ENCODE measurements at regions of chr20 and their contacts with region 1.

Region 1: GRCh38 chr20:62048821-62049685 is 16.6 kb downstream of the TAF4 start:
- DNase-seq: no peak
- H3K4me3 ChIP-seq: no peak overlapping the region
- H3K4me3 Mint-ChIP-seq: no peak overlapping the region
- H3K27ac Mint-ChIP-seq: no peak overlapping the region
- H3K4me1 ChIP-seq: no peaks in the 10 kb centered on the region
- H3K4me1 Mint-ChIP-seq: peaks cover 6% of the 10 kb centered on the region
- H3K27me3 ChIP-seq: no peaks in the 10 kb centered on the region
- H3K27me3 Mint-ChIP-seq: no peaks in the 10 kb centered on the region
- CTCF ChIP-seq: no peak

Region 2: DNA sequence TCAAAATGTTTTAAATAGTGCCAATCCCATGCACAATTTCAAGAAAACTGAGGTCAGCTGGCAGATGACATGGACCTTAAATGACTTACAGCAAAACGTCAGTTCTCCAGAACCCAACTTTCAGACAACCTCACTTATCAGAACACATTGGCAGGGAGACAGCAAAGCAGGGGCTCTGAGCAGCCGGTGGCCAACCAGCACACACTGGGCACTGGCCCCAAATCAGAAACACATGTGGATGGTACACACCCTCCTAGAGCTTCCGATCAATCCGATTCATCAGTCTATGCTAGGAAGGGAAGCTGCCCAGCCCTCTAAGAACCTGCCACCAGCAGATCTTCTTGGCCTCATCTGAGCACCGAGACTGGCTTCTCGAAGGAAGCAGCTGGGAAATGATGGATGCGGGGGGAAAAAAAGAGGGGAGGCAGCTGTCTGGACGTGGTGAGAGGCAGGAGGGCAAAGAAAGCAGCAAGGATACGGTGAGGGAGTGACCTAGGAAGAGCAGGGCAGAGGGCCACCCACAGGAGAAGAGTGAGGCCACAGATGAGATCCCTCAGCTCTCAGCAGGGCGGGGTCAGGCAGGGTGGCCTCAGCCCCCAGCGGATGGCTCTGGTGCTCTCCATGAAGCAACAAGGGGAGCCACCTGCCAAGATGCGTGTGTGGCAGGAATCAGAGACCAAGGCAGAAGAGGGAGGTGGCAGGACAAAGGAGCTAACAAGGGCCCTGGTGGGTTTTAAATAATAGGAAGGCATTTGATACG is 16.3 kb before region 1 on chr20:
- CTCF ChIA-PET with region 1: interaction called, 10 read pairs
- POLR2A ChIA-PET with region 1: no interaction called
- intact Hi-C with region 1: no loop called
- DNase-seq: no peak
- H3K4me3 ChIP-seq: no peak overlapping the region
- H3K4me3 Mint-ChIP-seq: no peak overlapping the region
- H3K27ac Mint-ChIP-seq: no peak overlapping the region
- H3K4me1 ChIP-seq: no peaks in the 10 kb centered on the region
- H3K4me1 Mint-ChIP-seq: peaks cover 15% of the 10 kb centered on the region
- H3K27me3 ChIP-seq: no peaks in the 10 kb centered on the region
- H3K27me3 Mint-ChIP-seq: no peaks in the 10 kb centered on the region
- CTCF ChIP-seq: no peak

Region 3: DNA sequence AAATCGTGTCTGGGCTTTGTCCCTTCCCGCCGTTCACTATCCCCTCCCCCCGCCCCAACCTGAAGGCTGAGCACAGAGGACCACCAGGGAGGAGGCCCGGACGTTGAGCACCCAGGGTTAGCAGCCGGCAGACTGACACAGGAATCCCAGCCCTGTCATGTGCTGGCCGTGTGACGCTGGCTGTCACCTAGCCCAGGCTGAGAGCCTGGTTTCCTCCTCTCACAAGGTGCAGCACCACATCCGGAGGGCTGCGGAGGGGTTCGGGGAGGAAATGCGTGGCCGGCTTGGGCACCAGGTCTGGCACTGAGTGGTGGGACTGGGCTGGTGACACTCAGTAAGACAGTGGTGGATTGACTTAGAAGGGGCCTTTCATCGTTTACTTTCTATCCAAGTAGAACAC is 68.6 kb after region 1 on chr20:
- CTCF ChIA-PET with region 1: no interaction called
- POLR2A ChIA-PET with region 1: no interaction called
- intact Hi-C with region 1: no loop called
- DNase-seq: no peak
- H3K4me3 ChIP-seq: no peak overlapping the region
- H3K4me3 Mint-ChIP-seq: no peak overlapping the region
- H3K27ac Mint-ChIP-seq: no peak overlapping the region
- H3K4me1 ChIP-seq: peaks cover 8% of the 10 kb centered on the region
- H3K4me1 Mint-ChIP-seq: peaks cover 14% of the 10 kb centered on the region
- H3K27me3 ChIP-seq: no peaks in the 10 kb centered on the region
- H3K27me3 Mint-ChIP-seq: peaks cover 15% of the 10 kb centered on the region
- CTCF ChIP-seq: no peak